AG04449 (cell line): ENCODE measurements at regions of chr3 and their contacts with region 1.

Region 1: GRCh38 chr3:24185738-24186384 is 240.8 kb downstream of the NR1D2 start:
- DNase-seq: peak; percentile 10
- H3K4me3 ChIP-seq: no peak overlapping the region
- CTCF ChIP-seq: peak; percentile 64

Region 2: DNA sequence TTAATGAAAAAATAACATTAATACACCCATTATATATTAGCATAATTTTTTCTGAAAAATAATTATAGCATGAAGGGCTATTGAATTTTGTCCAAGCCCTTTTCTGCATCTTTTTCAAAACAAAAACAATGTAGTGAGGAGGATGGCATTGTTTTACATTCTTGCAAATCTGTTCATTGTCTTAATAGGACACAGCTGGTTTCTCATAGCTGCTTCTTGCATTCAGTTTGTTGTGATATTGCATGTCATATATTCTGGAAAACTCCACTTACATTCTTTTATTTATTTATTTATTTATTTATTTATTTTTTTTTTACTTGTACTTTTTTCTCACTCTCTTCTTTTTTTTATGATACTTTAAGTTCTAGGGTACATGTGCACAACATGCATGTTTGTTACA is 133.4 kb before region 1 on chr3:
- CTCF ChIA-PET with region 1: no interaction called
- POLR2A ChIA-PET with region 1: no interaction called
- DNase-seq: no peak
- H3K4me3 ChIP-seq: no peak overlapping the region
- CTCF ChIP-seq: no peak

Region 3: DNA sequence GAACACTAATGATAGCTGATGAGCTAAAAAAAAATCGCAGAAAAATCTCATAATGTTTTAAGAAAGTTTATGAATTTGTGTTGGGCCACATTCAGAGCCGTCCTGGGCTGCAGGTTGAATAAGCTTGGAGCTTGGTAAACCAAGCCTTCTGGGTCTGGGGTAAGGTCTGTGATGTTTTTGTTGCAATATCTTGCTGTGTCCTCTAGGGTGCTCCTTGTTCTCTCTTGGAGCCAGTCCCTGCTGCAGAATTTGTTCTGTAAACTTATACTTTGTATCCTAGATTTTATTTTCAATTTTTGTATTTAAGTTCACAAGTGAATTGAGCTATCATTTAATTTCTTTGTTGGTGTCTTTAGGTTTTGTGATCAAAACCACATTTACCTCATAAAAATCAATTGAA is 97.1 kb before region 1 on chr3:
- CTCF ChIA-PET with region 1: interaction called, 11 read pairs
- POLR2A ChIA-PET with region 1: no interaction called
- DNase-seq: no peak
- H3K4me3 ChIP-seq: no peak overlapping the region
- CTCF ChIP-seq: peak; percentile 50

Region 4: DNA sequence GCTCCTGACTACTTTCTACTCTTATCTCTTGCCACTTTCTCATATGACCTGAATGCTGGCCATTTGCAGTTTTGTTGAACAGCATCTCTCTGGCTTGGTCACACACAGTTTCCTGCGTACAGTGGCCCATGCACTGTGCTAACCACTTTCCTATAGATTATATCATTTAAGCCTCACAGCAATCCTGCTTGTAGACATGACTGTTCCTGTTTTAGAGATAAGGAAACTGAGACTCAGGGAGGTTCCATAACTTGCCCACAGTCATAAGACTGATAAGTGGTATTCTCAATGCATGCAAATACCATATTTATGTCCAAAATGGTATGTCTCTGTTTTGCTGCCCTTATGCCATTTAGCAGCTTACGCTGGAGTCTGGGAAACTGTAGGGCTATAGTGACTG is 11.2 kb before region 1 on chr3:
- CTCF ChIA-PET with region 1: interaction called, 15 read pairs
- POLR2A ChIA-PET with region 1: no interaction called
- DNase-seq: no peak
- H3K4me3 ChIP-seq: no peak overlapping the region
- CTCF ChIP-seq: no peak

Region 5: GRCh38 chr3:24220859-24221657 is 35.2 kb after region 1 on chr3:
- CTCF ChIA-PET with region 1: interaction called, 18 read pairs
- POLR2A ChIA-PET with region 1: no interaction called
- DNase-seq: peak; percentile 89
- H3K4me3 ChIP-seq: no peak overlapping the region
- CTCF ChIP-seq: no peak